T-cell (primary cell): ENCODE measurements at regions of chr3 and their contacts with region 1.

Region 1: DNA sequence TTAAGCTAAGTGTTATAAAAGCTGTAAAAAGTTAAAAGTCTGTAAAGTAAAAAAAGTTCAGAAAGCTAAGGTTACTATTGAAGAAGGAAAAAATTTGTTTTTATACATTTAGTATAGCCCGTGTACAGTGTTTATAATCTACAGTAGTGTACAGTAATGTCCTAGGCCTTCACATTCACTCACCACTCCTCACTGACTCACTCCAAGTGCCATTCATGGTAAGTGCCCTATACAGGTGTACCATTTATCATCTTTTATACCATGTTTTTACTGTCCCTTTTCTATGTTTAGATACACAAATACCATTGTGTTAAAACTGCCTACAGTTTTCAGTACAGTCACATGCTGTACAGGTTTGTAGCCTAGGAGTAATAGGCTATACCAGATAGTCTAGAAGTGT is 8.8 kb downstream of the CCDC71 start:
- DNase-seq: no peak
- ATAC-seq: no peak
- H3K4me3 ChIP-seq: no peak overlapping the region
- H3K4me3 Mint-ChIP-seq: no peak overlapping the region
- H3K27ac ChIP-seq: no peak overlapping the region
- H3K27ac Mint-ChIP-seq: no peak overlapping the region
- H3K4me1 ChIP-seq: peaks cover 0 to 6% of the 10 kb centered on the region in 2 experiments
- H3K4me1 Mint-ChIP-seq: peaks cover 0 to 8% (median 6%) of the 10 kb centered on the region in 3 donors
- H3K27me3 ChIP-seq: no peaks in the 10 kb centered on the region
- H3K27me3 Mint-ChIP-seq: no peaks in the 10 kb centered on the region

Region 2: GRCh38 chr3:47176582-47176981 is 1980.7 kb before region 1 on chr3:
- CTCF ChIA-PET with region 1: interaction called in 1 of 2 experiments, 10 read pairs
- POLR2A ChIA-PET with region 1: no interaction called
- DNase-seq: no peak
- ATAC-seq: no peak
- H3K4me3 ChIP-seq: no peak overlapping the region
- H3K4me3 Mint-ChIP-seq: no peak overlapping the region
- H3K27ac ChIP-seq: no peak overlapping the region
- H3K27ac Mint-ChIP-seq: no peak overlapping the region
- H3K4me1 ChIP-seq: no peaks in the 10 kb centered on the region
- H3K4me1 Mint-ChIP-seq: no peaks in the 10 kb centered on the region
- H3K27me3 ChIP-seq: no peaks in the 10 kb centered on the region
- H3K27me3 Mint-ChIP-seq: no peaks in the 10 kb centered on the region